Lower leg skin (tissue), 4 donors: ENCODE measurements at regions of chr1 and their contacts with region 1.

Region 1: DNA sequence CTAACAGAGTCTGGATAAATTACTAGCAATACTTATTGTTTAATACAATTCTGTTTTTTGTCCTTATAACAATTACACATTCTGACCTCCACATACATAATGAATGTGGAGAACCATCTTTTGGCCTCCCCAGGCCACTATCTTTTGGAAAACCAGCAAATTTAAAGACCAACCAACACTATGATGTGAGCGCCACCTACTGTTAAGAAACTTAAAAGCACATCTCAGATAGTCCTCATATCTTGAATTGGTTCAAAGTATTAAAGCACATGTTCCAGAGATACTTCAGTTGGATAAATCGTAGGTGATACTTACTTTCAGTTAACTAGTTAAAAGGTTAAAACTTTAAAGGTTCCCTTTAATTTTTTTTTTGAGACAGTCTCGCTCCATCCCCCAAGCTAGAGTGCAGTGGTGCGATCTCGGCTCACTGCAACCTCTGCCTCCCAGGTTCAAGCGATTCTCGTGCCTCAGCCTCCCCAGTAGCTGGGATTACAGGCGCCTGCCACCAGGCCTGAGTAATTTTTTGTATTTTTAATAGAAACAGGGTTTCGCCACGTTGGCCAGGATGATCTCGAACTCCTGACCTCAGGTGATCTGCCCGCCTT is 29.3 kb upstream of the USP1 start:
- DNase-seq: no peak
- H3K4me3 ChIP-seq: no peak overlapping the region
- CTCF ChIP-seq: peak in 1 of 3 donors; percentile 34
- POLR2A ChIP-seq: no peak

Region 2: DNA sequence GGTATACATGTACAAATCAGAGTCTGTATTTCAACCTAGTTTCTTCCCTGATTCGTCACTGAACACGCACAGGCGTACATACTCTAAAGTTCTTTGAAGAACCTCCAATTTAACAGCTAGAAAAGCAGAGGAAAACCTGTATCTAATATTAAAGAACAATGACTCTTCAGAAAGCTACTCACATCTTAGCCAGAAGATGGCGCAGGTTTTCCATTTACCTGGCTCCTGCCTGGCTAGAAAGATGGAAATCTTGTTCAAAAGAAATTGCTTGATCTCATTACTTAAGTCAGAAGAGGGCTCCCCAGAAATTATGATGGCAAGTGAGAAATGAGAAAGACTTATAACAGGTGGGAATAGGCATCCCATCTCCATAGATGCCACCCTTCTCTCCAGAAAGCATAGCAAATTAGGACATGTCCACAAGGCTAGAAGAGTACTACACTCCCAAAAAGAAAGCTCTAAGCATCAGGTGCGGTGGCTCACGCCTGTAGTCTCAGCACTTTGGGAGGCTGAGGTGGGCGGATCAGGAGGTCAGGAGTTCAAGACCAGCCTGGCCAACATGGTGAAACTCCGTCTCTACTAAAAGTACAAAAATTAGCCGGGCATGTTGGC is 231.8 kb before region 1 on chr1:
- intact Hi-C with region 1: loop called (anchors 5 kb)
- DNase-seq: peak in 1 of 2 donors; percentile 42
- H3K4me3 ChIP-seq: no peak overlapping the region
- CTCF ChIP-seq: no peak
- POLR2A ChIP-seq: no peak

Region 3: DNA sequence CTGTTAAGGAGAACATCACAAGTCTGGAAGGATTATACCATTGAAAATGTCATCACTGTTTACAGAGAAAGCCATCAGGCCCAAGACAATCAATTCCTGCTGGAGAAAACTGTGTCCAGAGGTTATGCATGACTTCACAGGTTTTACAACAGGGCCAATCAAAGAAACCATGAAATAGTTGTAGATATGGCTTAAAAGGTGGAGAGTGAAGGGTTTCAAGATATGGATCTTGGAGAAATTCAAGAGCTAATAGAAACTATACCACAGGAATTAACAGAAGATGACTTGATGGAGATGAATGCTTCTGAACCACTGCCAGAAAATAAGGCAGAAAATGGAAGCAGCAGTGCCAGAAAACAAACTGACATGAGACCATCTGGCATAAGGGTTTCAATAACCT is 59.6 kb after region 1 on chr1:
- intact Hi-C with region 1: no loop called
- DNase-seq: no peak
- H3K4me3 ChIP-seq: no peak overlapping the region
- CTCF ChIP-seq: no peak
- POLR2A ChIP-seq: no peak